ENCODE measurements at regions of chr1 and their contacts with region 1.

Region 1: GRCh38 chr1:85602571-85602970 is 22.0 kb downstream of the CCN1 start:
- DNase-seq: no peak
- ATAC-seq: no peak
- H3K4me3 ChIP-seq: no peak overlapping the region
- H3K27ac ChIP-seq: no peak overlapping the region
- H3K4me1 ChIP-seq: no peaks in the 10 kb centered on the region
- H3K27me3 ChIP-seq: no peaks in the 10 kb centered on the region
- CTCF ChIP-seq: no peak
- POLR2A ChIP-seq: no peak

Region 2: GRCh38 chr1:85569122-85569521 is 33.4 kb before region 1 on chr1:
- intact Hi-C with region 1: no loop called
- DNase-seq: no peak
- ATAC-seq: peak in 3 of 4 donors; percentile 54 to 79 (median 58)
- H3K4me3 ChIP-seq: no peak overlapping the region
- H3K27ac ChIP-seq: peak overlapping the region in 9 of 12 donors; percentile 25 to 68 (median 37)
- H3K4me1 ChIP-seq: peaks cover 0 to 33% (median 10%) of the 10 kb centered on the region in 12 donors
- H3K27me3 ChIP-seq: no peaks in the 10 kb centered on the region
- CTCF ChIP-seq: no peak
- POLR2A ChIP-seq: no peak

Region 3: DNA sequence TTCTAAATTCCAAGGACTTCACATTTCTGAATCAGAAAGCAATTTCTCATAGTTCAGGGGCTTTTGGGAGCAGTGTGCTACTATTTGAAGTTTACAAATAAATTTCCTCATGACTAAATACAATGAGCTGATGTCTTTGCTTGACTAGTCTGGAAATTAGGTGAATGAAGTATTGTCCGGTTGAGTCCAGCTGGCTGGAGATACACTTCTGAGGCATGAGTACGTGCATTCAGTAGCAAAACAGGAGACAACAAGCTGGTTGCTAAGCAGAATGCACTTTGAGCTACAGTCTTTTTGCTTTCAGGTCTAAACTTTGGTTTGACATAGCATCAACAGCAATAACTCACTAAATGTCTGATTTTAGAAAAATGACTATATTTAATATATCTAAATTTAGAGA is 78.5 kb after region 1 on chr1:
- intact Hi-C with region 1: loop called in 1 of 10 experiments (anchors 5 kb)
- DNase-seq: no peak
- ATAC-seq: peak; percentile 61 to 84 (median 82)
- H3K4me3 ChIP-seq: no peak overlapping the region
- H3K27ac ChIP-seq: no peak overlapping the region
- H3K4me1 ChIP-seq: peaks cover 0 to 13% (median 0%) of the 10 kb centered on the region in 12 donors
- H3K27me3 ChIP-seq: no peaks in the 10 kb centered on the region
- CTCF ChIP-seq: no peak
- POLR2A ChIP-seq: no peak